ENCODE measurements at regions of chr7 and their contacts with region 1.

Region 1: DNA sequence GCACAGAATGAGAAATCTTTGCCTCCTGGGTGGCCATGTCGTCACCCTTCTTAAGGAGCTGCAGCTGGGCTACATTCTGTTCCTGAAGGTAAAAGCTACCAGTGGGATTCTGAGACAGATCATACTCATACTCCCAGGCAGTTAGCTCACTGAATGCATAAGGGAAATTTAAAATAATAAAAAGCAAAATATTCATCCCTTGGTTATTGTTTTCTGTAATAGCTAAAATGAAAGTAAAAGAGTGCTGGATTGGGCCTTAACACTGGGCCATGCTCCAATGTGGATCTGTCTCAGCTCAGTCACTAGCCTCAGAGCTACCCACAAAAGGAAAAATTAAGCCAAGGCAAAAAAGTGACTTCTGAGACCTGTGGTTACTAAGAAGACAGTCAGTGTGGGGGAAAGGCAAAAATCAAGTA is 8.9 kb upstream of the DYNC2I1 start:
- DNase-seq: peak; percentile 39
- ATAC-seq: peak; percentile 81
- H3K4me3 Mint-ChIP-seq: peak overlapping the region; percentile 66
- H3K27ac Mint-ChIP-seq: peak overlapping the region; percentile 95
- H3K4me1 Mint-ChIP-seq: peaks cover 39% of the 10 kb centered on the region
- H3K27me3 Mint-ChIP-seq: no peaks in the 10 kb centered on the region

Region 2: GRCh38 chr7:158120716-158121115 is 726.7 kb before region 1 on chr7:
- CTCF ChIA-PET with region 1: no interaction called
- POLR2A ChIA-PET with region 1: no interaction called
- intact Hi-C with region 1: no loop called
- DNase-seq: no peak
- ATAC-seq: no peak
- H3K4me3 Mint-ChIP-seq: no peak overlapping the region
- H3K27ac Mint-ChIP-seq: no peak overlapping the region
- H3K4me1 Mint-ChIP-seq: no peaks in the 10 kb centered on the region
- H3K27me3 Mint-ChIP-seq: no peaks in the 10 kb centered on the region

Region 3: GRCh38 chr7:158754746-158755444 is 92.6 kb before region 1 on chr7:
- CTCF ChIA-PET with region 1: no interaction called
- POLR2A ChIA-PET with region 1: no interaction called
- intact Hi-C with region 1: no loop called
- DNase-seq: no peak
- ATAC-seq: no peak
- H3K4me3 Mint-ChIP-seq: no peak overlapping the region
- H3K27ac Mint-ChIP-seq: peak overlapping the region; percentile 66
- H3K4me1 Mint-ChIP-seq: peaks cover 7% of the 10 kb centered on the region
- H3K27me3 Mint-ChIP-seq: no peaks in the 10 kb centered on the region

Region 4: DNA sequence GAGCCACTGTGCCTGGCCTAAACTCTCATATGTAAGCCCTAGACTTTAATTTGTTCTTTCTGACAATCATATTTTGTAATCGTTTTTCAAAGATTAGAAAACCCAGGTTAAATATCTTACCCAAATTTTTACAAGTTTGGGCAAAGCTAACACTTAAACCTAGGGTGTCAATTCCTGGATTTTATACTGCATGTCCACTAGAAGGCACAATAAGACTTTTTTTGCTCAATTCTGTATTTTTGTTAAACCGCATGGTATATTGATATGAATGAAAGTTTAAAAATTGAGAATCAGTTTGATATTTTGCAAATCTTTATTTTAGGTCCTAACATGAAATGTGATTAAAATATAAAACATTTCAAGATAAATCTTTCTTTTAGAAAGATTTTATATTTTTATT is 38.2 kb after region 1 on chr7:
- CTCF ChIA-PET with region 1: no interaction called
- POLR2A ChIA-PET with region 1: interaction called, 10 read pairs
- intact Hi-C with region 1: no loop called
- DNase-seq: no peak
- ATAC-seq: no peak
- H3K4me3 Mint-ChIP-seq: no peak overlapping the region
- H3K27ac Mint-ChIP-seq: no peak overlapping the region
- H3K4me1 Mint-ChIP-seq: no peaks in the 10 kb centered on the region
- H3K27me3 Mint-ChIP-seq: no peaks in the 10 kb centered on the region

Region 5: DNA sequence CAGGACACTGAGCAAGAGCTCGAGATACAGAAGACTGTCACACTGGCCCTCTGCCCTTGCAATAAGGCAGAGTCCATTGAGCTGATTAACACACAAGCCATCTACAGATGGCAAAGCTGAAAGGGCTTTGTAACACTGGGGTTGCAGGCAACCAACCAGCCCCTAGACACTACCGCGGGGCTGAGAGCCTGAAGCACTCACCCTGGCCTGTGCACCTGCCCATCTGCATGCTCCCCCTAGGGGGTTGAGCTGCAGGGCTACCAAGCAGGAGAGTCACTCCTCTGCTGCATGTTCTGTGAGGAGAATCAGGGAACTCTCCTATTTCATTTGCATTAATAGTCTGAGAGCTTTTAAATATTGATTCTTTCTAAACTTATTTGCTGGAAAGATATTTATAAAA is 425.3 kb after region 1 on chr7:
- CTCF ChIA-PET with region 1: no interaction called
- POLR2A ChIA-PET with region 1: no interaction called
- intact Hi-C with region 1: no loop called
- DNase-seq: no peak
- ATAC-seq: no peak
- H3K4me3 Mint-ChIP-seq: no peak overlapping the region
- H3K27ac Mint-ChIP-seq: no peak overlapping the region
- H3K4me1 Mint-ChIP-seq: no peaks in the 10 kb centered on the region
- H3K27me3 Mint-ChIP-seq: peaks cover 7% of the 10 kb centered on the region

Measured in activated CD4-positive, alpha-beta T cell treated with anti-CD3 and anti-CD28 coated beads for 36 hours (primary cell).